Mammary epithelial cell (primary cell): ENCODE measurements at regions of chr14 and their contacts with region 1.

Region 1: DNA sequence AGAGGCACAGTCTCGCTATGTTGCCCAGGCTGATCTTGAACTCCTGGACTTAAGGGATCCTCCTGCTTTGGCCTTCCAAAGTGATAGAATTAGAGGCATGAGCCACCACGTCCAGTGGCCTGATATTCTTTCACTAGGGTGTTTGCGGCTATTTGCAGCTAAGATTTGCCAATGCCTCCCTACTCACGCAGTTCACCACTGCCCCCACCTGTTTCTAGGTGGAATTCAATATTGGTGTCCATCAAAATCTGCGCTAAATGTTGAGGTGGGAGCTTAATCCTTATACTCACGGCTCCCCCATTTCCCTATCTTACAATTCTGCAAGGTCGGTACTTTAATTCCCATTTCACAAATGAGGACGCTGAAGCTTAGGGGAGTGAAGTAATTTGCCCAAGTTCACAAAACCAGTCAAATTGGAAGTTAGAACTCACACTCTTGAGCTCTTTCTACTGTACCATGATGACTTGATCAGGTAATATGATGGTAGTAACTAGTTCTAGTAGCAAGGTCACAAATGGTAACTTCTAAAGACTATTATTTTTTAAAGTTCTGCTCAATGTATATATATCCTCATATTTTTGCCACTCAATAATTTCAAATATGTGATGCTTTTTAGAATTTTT is 22.1 kb upstream of the LRRC9 start:
- DNase-seq: peak; percentile 14
- H3K4me3 ChIP-seq: no peak overlapping the region
- H3K27ac ChIP-seq: no peak overlapping the region
- H3K4me1 ChIP-seq: no peaks in the 10 kb centered on the region
- H3K27me3 ChIP-seq: peaks cover 3% of the 10 kb centered on the region
- CTCF ChIP-seq: peak; percentile 44 to 69

Region 2: DNA sequence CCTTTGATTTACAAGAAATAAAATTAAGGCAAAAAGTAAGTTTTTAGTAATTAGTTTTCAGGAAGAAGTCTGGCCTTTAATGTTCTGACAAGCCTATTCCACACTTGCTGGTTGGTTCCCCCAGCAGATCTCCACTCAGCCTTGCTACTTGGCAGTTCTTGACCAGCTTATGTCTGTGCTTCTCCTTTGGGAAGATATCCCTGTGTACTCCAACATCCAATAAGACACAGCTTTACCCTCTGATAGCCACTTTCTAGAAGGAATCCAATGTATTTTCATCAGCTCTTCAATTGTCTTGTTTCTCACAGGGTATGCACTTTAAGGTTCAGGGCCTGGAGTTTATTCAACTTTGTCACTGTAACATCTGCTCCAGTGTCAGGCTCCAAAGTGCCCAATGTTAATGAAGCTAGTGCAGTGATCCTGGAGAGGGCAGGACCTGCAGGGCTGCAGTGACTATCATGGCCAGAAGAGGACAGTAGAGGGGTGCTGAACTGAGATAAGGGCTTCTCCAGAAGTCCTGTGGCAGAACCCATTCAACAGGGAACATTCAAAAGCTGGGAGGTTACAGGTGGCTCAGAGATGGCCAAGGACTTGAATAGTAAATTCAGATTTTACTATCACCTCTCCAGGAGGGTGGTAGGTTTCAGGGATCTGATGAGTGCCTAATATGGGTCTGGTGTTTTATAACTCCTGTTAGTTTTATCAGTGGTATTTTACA is 390.6 kb before region 1 on chr14:
- CTCF ChIA-PET with region 1: interaction called, 3 read pairs
- dilution Hi-C with region 1: no loop called
- in situ Hi-C with region 1: loop called in 1 of 2 experiments (anchors 25 kb)
- intact Hi-C with region 1: loop called (anchors 1 kb)
- DNase-seq: peak; percentile 34
- H3K4me3 ChIP-seq: no peak overlapping the region
- H3K27ac ChIP-seq: no peak overlapping the region
- H3K4me1 ChIP-seq: no peaks in the 10 kb centered on the region
- H3K27me3 ChIP-seq: peaks cover under 1% of the 10 kb centered on the region
- CTCF ChIP-seq: peak; percentile 98 to 99

Region 3: DNA sequence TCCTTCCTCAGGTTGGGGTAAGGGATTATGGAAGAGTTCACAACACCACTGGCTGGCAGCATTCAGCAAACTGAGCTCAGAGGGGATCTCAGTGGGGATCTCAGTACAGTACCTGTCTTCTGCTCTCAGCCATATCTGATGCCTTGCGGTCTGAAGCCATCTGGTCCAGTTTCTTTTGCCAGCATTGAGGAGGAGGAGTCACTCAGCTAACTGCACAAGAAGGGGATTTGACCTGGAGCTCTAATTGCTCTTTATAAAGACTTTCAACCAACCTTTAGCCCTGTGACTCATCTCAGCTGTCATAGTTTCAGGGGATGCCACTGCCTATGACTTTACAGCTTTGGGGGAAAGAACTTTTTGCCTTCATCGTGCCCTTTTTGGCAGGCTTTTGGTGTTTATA is 368.7 kb before region 1 on chr14:
- CTCF ChIA-PET with region 1: no interaction called
- dilution Hi-C with region 1: no loop called
- in situ Hi-C with region 1: loop called in 1 of 2 experiments (anchors 25 kb)
- intact Hi-C with region 1: loop called (anchors 5 kb)
- DNase-seq: no peak
- H3K4me3 ChIP-seq: no peak overlapping the region
- H3K27ac ChIP-seq: no peak overlapping the region
- H3K4me1 ChIP-seq: no peaks in the 10 kb centered on the region
- H3K27me3 ChIP-seq: no peaks in the 10 kb centered on the region
- CTCF ChIP-seq: no peak

Region 4: GRCh38 chr14:59707778-59708561 is 189.9 kb before region 1 on chr14:
- CTCF ChIA-PET with region 1: interaction called, 4 read pairs
- dilution Hi-C with region 1: no loop called
- in situ Hi-C with region 1: no loop called
- intact Hi-C with region 1: loop called (anchors 10 kb)
- DNase-seq: no peak
- H3K4me3 ChIP-seq: no peak overlapping the region
- H3K27ac ChIP-seq: no peak overlapping the region
- H3K4me1 ChIP-seq: no peaks in the 10 kb centered on the region
- H3K27me3 ChIP-seq: no peaks in the 10 kb centered on the region
- CTCF ChIP-seq: no peak